Aorta (tissue), 5 donors: ENCODE measurements at regions of chr9 and their contacts with region 1.

Region 1: GRCh38 chr9:116149844-116150243 is 3.7 kb upstream of the PAPPA start:
- DNase-seq: no peak
- ATAC-seq: peak; percentile 48
- H3K4me3 ChIP-seq: no peak overlapping the region
- H3K27ac ChIP-seq: no peak overlapping the region
- H3K4me1 ChIP-seq: no peaks in the 10 kb centered on the region
- H3K27me3 ChIP-seq: no peaks in the 10 kb centered on the region

Region 2: GRCh38 chr9:115694014-115694413 is 455.8 kb before region 1 on chr9:
- intact Hi-C with region 1: loop called (anchors 10 kb)
- DNase-seq: no peak
- ATAC-seq: peak; percentile 37
- H3K4me3 ChIP-seq: no peak overlapping the region
- H3K27ac ChIP-seq: no peak overlapping the region
- H3K4me1 ChIP-seq: no peaks in the 10 kb centered on the region
- H3K27me3 ChIP-seq: no peaks in the 10 kb centered on the region

Region 3: DNA sequence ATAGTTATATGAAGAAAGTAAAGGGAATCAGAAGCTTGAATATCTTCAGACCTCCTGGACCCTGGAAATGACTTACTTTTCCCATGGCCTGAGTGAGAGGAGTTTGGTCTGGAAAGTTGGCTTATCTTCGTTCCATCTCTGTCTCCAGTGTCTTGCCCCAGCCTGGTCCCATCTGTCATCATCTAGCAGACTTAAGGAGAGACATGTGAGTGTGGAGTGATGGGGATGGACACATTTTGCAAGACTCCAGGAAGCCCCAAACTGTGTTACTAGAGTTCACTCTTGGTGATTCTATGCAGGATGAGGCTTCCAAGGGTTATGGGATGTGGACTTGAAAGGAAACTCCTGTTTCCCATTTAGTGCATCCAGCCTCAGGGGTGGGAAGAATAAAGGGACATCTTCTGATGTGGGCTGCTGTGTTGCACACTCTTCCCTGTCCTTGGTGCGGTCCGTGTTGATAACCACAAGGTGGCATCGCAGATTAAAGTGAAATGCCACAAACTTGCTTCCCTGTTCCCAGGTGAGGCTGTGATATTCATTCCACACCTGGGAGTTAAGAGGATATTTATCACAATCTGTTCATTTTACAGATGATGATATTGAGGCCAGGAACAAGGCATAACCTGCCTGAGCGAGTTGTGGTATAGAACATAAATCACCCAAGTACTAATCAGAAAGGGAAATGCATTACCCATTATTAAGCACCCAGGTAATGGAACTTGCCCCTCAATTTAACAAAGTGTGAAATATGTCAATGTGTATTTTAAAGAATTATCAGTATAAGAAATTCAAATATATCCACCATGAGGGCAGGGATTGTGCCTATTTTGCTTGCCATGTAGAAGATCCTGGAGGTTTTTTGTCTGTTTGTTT is 266.2 kb before region 1 on chr9:
- intact Hi-C with region 1: loop called in 1 of 2 experiments (anchors 5 kb)
- DNase-seq: no peak
- ATAC-seq: no peak
- H3K4me3 ChIP-seq: no peak overlapping the region
- H3K27ac ChIP-seq: no peak overlapping the region
- H3K4me1 ChIP-seq: peaks cover 2 to 5% of the 10 kb centered on the region in 2 donors
- H3K27me3 ChIP-seq: no peaks in the 10 kb centered on the region

Region 4: GRCh38 chr9:116471093-116471906 is 321.5 kb after region 1 on chr9:
- intact Hi-C with region 1: no loop called
- DNase-seq: peak in 1 of 2 donors; percentile 78
- ATAC-seq: peak; percentile 55
- H3K4me3 ChIP-seq: no peak overlapping the region
- H3K27ac ChIP-seq: peak overlapping the region; percentile 15 to 77
- H3K4me1 ChIP-seq: no peaks in the 10 kb centered on the region
- H3K27me3 ChIP-seq: no peaks in the 10 kb centered on the region

Region 5: GRCh38 chr9:116572095-116572748 is 422.4 kb after region 1 on chr9:
- intact Hi-C with region 1: loop called in 1 of 2 experiments (anchors 5 kb)
- DNase-seq: peak; percentile 87 to 93
- ATAC-seq: peak; percentile 88
- H3K4me3 ChIP-seq: no peak overlapping the region
- H3K27ac ChIP-seq: no peak overlapping the region
- H3K4me1 ChIP-seq: no peaks in the 10 kb centered on the region
- H3K27me3 ChIP-seq: no peaks in the 10 kb centered on the region

Region 6: DNA sequence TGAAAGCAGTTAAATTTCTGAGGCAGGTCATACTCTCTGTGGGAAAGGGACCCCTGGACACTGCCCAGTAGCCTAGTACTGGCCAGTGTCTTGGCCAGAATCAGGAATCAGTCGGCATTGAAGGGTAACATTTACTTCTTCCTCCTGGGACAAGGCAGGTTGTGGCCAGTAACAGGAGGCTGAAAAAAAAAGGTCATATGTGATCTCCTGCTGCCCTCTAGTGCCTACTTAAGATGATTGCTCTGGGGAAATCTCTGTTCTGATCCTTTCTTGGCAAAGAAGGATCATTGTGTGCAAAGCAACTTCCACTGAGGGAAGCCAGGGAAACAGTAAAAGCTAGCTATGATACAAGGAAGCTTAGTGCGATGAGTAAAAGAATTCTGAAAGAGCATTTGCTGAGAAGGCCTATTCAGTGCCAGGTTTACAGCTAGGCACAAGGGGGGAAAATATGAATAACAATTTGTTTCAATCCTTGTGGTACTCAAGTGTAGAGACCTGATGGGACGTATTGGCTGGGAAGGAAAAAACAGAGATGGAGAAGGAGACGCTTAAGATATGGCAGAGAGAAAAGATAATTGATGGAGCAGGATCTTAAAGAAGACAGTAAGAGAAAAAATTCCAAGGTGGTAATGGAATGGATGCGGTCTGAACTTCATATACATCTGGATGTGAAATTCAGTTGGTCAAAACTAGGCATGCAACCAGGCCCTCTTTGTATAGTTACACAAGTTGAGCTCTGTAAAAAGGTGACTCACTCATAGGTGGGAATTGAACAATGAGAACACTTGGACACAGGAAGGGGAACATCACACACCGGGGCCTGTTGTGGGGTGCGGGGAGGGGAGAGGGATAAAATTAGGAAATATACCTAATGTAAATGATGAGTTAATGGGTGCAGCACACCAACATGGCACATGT is 511.5 kb after region 1 on chr9:
- intact Hi-C with region 1: loop called in 1 of 2 experiments (anchors 10 kb)
- DNase-seq: no peak
- ATAC-seq: peak; percentile 83
- H3K4me3 ChIP-seq: no peak overlapping the region
- H3K27ac ChIP-seq: no peak overlapping the region
- H3K4me1 ChIP-seq: no peaks in the 10 kb centered on the region
- H3K27me3 ChIP-seq: no peaks in the 10 kb centered on the region